PC-3 (cell line): ENCODE measurements at regions of chr21 and their contacts with region 1.

Region 1: DNA sequence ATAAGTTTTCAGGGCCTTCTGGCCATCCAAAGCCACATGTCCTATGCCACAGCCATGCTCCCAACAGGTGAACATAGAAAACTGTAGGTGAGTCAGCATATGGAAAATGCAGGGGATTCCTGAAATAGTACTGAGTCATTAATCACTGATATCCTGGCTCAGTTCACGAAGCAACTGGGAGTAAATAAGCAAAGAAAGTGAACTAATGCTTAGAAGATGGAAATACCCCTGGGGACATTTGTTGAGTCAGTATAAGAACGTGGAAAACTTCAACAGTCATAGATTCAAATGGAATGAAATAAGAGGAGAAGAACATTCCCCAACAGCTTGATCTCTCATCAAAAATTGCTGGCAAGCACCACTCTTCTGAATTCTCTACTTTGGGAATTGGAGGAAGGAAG is 148.9 kb upstream of the RUNX1 start:
- DNase-seq: peak; percentile 99
- ATAC-seq: peak; percentile 89
- H3K4me3 ChIP-seq: no peak overlapping the region
- H3K27ac ChIP-seq: peak overlapping the region; percentile 91
- H3K4me1 ChIP-seq: peaks cover 60% of the 10 kb centered on the region
- H3K27me3 ChIP-seq: no peaks in the 10 kb centered on the region
- CTCF ChIP-seq: no peak

Region 2: GRCh38 chr21:35232545-35233176 is 34.6 kb after region 1 on chr21:
- CTCF ChIA-PET with region 1: no interaction called
- POLR2A ChIA-PET with region 1: no interaction called
- intact Hi-C with region 1: loop called (anchors 2 kb)
- DNase-seq: peak; percentile 91
- ATAC-seq: peak; percentile 95
- H3K4me3 ChIP-seq: peak overlapping the region; percentile 1; the same call in 1 of the 2 replicates
- H3K27ac ChIP-seq: peak overlapping the region; percentile 40
- H3K4me1 ChIP-seq: peaks cover 25% of the 10 kb centered on the region
- H3K27me3 ChIP-seq: no peaks in the 10 kb centered on the region
- CTCF ChIP-seq: no peak